CD4-positive, alpha-beta memory T cell (primary cell): ENCODE measurements at regions of chr13 and their contacts with region 1.

Region 1: GRCh38 chr13:86882835-86883234 is 788.3 kb upstream of the SLITRK5 start:
- DNase-seq: no peak
- H3K4me3 ChIP-seq: no peak overlapping the region
- H3K4me3 Mint-ChIP-seq: peak overlapping the region in 1 of 8 donors; percentile 6
- H3K27ac ChIP-seq: no peak overlapping the region
- H3K27ac Mint-ChIP-seq: no peak overlapping the region
- H3K4me1 ChIP-seq: no peaks in the 10 kb centered on the region
- H3K4me1 Mint-ChIP-seq: no peaks in the 10 kb centered on the region
- H3K27me3 ChIP-seq: no peaks in the 10 kb centered on the region
- H3K27me3 Mint-ChIP-seq: no peaks in the 10 kb centered on the region

Region 2: GRCh38 chr13:86660090-86660489 is 222.7 kb before region 1 on chr13:
- CTCF ChIA-PET with region 1: no interaction called
- POLR2A ChIA-PET with region 1: no interaction called
- intact Hi-C with region 1: loop called (anchors 5 kb)
- DNase-seq: no peak
- H3K4me3 ChIP-seq: no peak overlapping the region
- H3K4me3 Mint-ChIP-seq: no peak overlapping the region
- H3K27ac ChIP-seq: no peak overlapping the region
- H3K27ac Mint-ChIP-seq: no peak overlapping the region
- H3K4me1 ChIP-seq: no peaks in the 10 kb centered on the region
- H3K4me1 Mint-ChIP-seq: no peaks in the 10 kb centered on the region
- H3K27me3 ChIP-seq: no peaks in the 10 kb centered on the region
- H3K27me3 Mint-ChIP-seq: no peaks in the 10 kb centered on the region

Region 3: DNA sequence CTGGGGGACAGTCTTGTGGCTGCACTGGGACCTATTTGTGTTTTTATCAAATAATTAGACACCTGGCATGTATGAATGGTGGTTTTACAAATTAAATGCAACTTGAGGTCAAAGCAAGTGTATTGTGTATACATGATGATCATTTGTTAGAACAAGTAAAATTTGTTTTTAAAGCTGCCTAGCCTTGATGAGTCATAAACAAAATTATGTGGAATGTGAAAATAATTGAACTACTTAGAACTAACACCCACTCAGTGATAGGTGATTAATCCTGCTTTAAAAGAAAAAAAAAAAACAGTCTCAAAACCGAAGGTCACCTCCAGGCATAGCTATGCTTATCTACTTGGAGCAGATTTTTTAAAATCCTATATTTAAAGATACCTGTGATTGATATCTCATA is 18.1 kb after region 1 on chr13:
- CTCF ChIA-PET with region 1: no interaction called
- POLR2A ChIA-PET with region 1: no interaction called
- intact Hi-C with region 1: no loop called
- DNase-seq: no peak
- H3K4me3 ChIP-seq: no peak overlapping the region
- H3K4me3 Mint-ChIP-seq: no peak overlapping the region
- H3K27ac ChIP-seq: no peak overlapping the region
- H3K27ac Mint-ChIP-seq: no peak overlapping the region
- H3K4me1 ChIP-seq: no peaks in the 10 kb centered on the region
- H3K4me1 Mint-ChIP-seq: no peaks in the 10 kb centered on the region
- H3K27me3 ChIP-seq: no peaks in the 10 kb centered on the region
- H3K27me3 Mint-ChIP-seq: no peaks in the 10 kb centered on the region